ENCODE measurements at regions of chr15 and their contacts with region 1.

Region 1: GRCh38 chr15:95032156-95032555 is 800.8 kb downstream of the MCTP2 start:
- DNase-seq: no peak
- H3K4me3 ChIP-seq: no peak overlapping the region
- H3K27ac ChIP-seq: no peak overlapping the region
- H3K4me1 ChIP-seq: no peaks in the 10 kb centered on the region
- H3K27me3 ChIP-seq: no peaks in the 10 kb centered on the region

Region 2: GRCh38 chr15:94700211-94700610 is 331.9 kb before region 1 on chr15:
- in situ Hi-C with region 1: no loop called
- DNase-seq: no peak
- H3K4me3 ChIP-seq: no peak overlapping the region
- H3K27ac ChIP-seq: no peak overlapping the region
- H3K4me1 ChIP-seq: no peaks in the 10 kb centered on the region
- H3K27me3 ChIP-seq: no peaks in the 10 kb centered on the region

Region 3: GRCh38 chr15:94855409-94856266 is 176.5 kb before region 1 on chr15:
- in situ Hi-C with region 1: no loop called
- DNase-seq: no peak
- H3K4me3 ChIP-seq: no peak overlapping the region
- H3K27ac ChIP-seq: no peak overlapping the region
- H3K4me1 ChIP-seq: no peaks in the 10 kb centered on the region
- H3K27me3 ChIP-seq: no peaks in the 10 kb centered on the region

Region 4: DNA sequence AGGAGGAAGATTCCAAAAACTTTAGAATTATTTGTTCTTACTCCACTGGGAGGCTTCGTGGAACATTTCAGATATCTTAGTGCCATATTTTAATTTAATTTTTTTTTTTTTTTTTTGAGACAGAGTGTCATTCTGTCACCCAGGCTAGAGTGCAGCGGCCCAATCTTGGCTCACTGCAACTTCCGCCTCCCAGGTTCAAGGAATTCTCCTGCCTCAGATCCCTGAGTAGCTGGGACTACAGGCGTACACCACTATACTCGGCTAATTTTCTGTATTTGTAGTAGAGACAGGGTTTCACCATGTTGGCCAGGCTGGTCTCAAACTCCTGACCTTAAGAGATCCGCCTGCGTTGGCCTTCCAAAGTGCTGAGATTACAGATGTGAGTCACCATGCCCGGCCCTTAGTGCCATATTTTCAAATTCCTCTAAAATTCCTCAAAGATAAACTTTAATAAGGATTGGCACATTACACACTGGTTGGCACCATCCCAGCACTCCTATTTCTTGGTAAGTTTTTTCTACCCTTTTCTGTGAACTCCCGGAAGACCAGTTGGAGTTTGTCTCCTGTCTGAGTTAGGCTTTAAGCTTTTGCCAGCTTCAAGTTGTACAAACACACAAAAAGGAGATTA is 107.1 kb before region 1 on chr15:
- in situ Hi-C with region 1: no loop called
- DNase-seq: no peak
- H3K4me3 ChIP-seq: no peak overlapping the region
- H3K27ac ChIP-seq: no peak overlapping the region
- H3K4me1 ChIP-seq: no peaks in the 10 kb centered on the region
- H3K27me3 ChIP-seq: no peaks in the 10 kb centered on the region

Region 5: DNA sequence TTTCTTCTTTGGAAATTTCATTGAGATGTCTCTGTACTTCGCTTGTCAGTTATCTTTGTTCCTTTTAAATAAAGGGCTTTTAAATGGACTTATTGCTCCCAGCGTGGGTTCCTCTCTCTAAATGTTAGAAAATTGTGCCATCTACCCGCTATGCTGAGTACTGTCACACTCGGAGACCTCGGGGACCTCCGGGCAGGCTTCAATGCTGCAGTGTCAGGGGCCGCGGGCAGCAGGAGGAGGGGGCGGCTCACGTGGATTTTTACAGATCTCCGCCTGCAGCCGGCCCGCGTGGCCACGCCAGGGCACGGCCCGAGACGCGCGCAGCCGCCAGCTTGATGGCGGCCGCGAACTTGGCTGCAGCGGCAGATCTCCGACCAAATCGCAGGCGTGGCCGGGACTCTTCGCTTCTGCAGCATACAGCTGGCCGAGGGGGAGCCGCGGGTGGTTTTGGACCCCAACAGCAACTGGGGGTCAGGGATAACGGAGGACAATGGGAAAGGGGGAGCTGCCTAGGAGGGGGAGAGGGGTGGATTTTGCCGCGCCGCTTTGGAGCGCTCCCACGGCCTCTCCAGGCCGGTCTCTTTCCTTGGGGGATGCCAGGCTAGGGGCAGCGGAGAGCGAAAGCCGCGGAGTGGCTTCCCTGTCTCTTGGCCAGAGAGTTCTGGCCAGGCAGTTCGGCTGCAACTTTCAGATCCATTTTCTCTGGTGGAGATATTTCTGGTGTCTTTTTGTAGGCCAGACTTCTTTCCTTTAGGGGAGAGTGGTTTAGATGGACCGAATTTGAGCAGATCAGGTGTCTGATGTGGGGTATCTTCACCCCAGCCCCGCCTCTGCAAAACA is 1313.6 kb after region 1 on chr15:
- in situ Hi-C with region 1: loop called (anchors 10 kb)
- DNase-seq: peak; percentile 88
- H3K4me3 ChIP-seq: peak overlapping the region; percentile 69
- H3K27ac ChIP-seq: peak overlapping the region; percentile 52
- H3K4me1 ChIP-seq: peaks cover 41% of the 10 kb centered on the region
- H3K27me3 ChIP-seq: no peaks in the 10 kb centered on the region